Dendritic cell treated with granulocyte-macrophage colony-stimulating factor and Interleukin-4, amounts not matched to agents 40 ng/mL and 50 ng/mL, for 4 days (primary cell): ENCODE measurements at regions of chr13 and their contacts with region 1.

Region 1: DNA sequence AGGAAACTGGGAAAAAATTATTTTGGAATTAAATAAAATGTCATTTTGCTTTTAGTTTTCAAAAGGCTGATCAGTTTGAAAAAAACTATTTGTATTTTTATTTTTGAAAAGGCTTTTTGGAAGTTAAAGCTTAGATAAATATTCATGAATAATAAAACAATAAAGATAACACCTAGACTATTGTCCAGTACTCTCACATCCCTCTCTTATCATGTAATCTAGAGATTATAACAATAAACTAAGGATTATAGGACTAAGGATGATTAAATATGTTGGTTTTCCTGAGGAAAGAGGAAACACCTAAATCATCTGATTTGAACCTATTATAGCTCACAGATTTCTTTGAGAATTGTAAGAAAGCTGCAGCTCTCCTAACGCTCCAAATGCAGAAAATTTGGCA is 81.4 kb upstream of the AKAP11 start:
- H3K4me3 Mint-ChIP-seq: no peak overlapping the region
- H3K27ac Mint-ChIP-seq: no peak overlapping the region
- H3K4me1 Mint-ChIP-seq: no peaks in the 10 kb centered on the region
- H3K27me3 Mint-ChIP-seq: no peaks in the 10 kb centered on the region

Region 2: GRCh38 chr13:43145534-43146196 is 955.1 kb after region 1 on chr13:
- intact Hi-C with region 1: loop called (anchors 5 kb)
- H3K4me3 Mint-ChIP-seq: no peak overlapping the region
- H3K27ac Mint-ChIP-seq: no peak overlapping the region
- H3K4me1 Mint-ChIP-seq: no peaks in the 10 kb centered on the region
- H3K27me3 Mint-ChIP-seq: peaks cover 9% of the 10 kb centered on the region